Calu3 (cell line): ENCODE measurements at regions of chr16 and their contacts with region 1.

Region 1: GRCh38 chr16:48321317-48322036 is 63.7 kb downstream of the SIAH1 start:
- DNase-seq: no peak
- H3K4me3 Mint-ChIP-seq: no peak overlapping the region
- H3K27ac Mint-ChIP-seq: no peak overlapping the region
- H3K4me1 Mint-ChIP-seq: no peaks in the 10 kb centered on the region
- H3K27me3 Mint-ChIP-seq: no peaks in the 10 kb centered on the region
- CTCF ChIP-seq: no peak

Region 2: GRCh38 chr16:48041861-48042480 is 279.5 kb before region 1 on chr16:
- CTCF ChIA-PET with region 1: no interaction called
- intact Hi-C with region 1: no loop called
- DNase-seq: peak; percentile 27
- H3K4me3 Mint-ChIP-seq: no peak overlapping the region
- H3K27ac Mint-ChIP-seq: no peak overlapping the region
- H3K4me1 Mint-ChIP-seq: no peaks in the 10 kb centered on the region
- H3K27me3 Mint-ChIP-seq: peaks cover 20% of the 10 kb centered on the region
- CTCF ChIP-seq: no peak

Region 3: DNA sequence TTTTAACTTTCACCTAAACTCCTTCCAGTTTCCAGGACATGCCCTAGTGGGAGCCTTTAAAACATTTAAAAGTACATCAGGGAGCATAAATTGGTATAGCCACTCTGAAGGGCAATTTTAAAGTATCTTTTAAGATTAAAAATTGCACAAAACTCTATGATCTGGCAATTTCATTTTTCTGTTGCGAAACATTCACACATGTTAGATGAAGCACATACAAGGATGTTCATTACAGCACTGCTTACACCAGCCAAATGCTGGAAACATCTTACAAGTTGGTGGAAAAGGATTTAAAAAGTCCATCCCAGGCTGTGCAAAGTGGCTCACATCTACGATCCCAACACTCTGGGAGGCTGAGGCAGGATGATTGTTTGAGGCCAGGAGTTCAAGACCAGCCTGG is 103.8 kb before region 1 on chr16:
- CTCF ChIA-PET with region 1: no interaction called
- intact Hi-C with region 1: no loop called
- DNase-seq: no peak
- H3K4me3 Mint-ChIP-seq: no peak overlapping the region
- H3K27ac Mint-ChIP-seq: no peak overlapping the region
- H3K4me1 Mint-ChIP-seq: peaks cover 30% of the 10 kb centered on the region
- H3K27me3 Mint-ChIP-seq: peaks cover 16% of the 10 kb centered on the region
- CTCF ChIP-seq: no peak

Region 4: GRCh38 chr16:48235556-48236136 is 85.8 kb before region 1 on chr16:
- CTCF ChIA-PET with region 1: interaction called, 5 read pairs
- intact Hi-C with region 1: loop called (anchors 5 kb)
- DNase-seq: no peak
- H3K4me3 Mint-ChIP-seq: no peak overlapping the region
- H3K27ac Mint-ChIP-seq: no peak overlapping the region
- H3K4me1 Mint-ChIP-seq: peaks cover 20% of the 10 kb centered on the region
- H3K27me3 Mint-ChIP-seq: no peaks in the 10 kb centered on the region
- CTCF ChIP-seq: no peak

Region 5: GRCh38 chr16:48384305-48384986 is 63.0 kb after region 1 on chr16:
- CTCF ChIA-PET with region 1: no interaction called
- intact Hi-C with region 1: no loop called
- DNase-seq: peak; percentile 73
- H3K4me3 Mint-ChIP-seq: peak overlapping the region; percentile 96
- H3K27ac Mint-ChIP-seq: peak overlapping the region; percentile 95
- H3K4me1 Mint-ChIP-seq: peaks cover 45% of the 10 kb centered on the region
- H3K27me3 Mint-ChIP-seq: no peaks in the 10 kb centered on the region
- CTCF ChIP-seq: no peak